HCT116 (cell line): ENCODE measurements at regions of chr12 and their contacts with region 1.

Region 1: DNA sequence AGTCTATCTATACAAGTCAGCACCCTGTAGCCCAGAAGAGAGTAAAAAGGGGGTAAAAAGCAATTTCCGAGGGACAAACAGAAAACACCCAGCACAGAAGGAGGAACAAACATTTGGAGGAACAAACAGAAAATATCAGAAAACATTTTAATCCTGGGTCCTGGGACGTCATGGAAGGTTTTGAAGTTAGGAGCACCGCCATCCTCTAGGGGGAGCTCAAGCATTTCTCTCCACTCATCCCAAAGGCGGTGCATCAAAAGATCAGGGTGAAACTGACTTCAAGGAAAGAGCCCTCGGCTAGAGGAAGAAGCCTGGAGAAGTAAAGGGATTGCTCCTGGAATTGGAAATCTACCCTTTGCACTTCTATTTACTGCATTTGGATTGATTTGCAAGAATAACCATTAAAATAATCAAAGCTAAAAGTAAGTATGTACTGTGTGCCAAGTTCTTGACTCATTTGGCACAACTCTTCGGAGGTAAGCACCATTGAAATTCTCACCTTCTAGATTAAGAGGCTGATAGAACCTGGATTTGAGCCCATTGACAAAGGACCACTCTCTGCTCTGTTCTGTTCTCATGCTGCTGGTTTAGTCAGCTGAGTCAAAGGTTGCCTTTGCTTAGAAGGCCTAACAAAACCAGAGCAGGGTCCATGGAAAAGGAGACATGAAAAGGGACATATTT is 17.2 kb upstream of the POC1B start:
- DNase-seq: peak; percentile 77
- ATAC-seq: peak; percentile 90
- H3K4me3 ChIP-seq: no peak overlapping the region
- H3K27ac ChIP-seq: no peak overlapping the region
- H3K4me1 ChIP-seq: peaks cover 0 to 4% of the 10 kb centered on the region in 2 experiments; a peak in 1 of 4 replicates
- H3K27me3 ChIP-seq: no peaks in the 10 kb centered on the region
- CTCF ChIP-seq: peak; percentile 74 to 92 (median 88)
- POLR2A ChIP-seq: no peak
- RAD21 ChIP-seq: peak; percentile 98

Region 2: GRCh38 chr12:89960011-89960507 is 417.0 kb after region 1 on chr12:
- CTCF ChIA-PET with region 1: no interaction called
- POLR2A ChIA-PET with region 1: no interaction called
- RAD21 ChIA-PET with region 1: no interaction called
- intact Hi-C with region 1: loop called (anchors 5 kb)
- DNase-seq: no peak
- ATAC-seq: no peak
- H3K4me3 ChIP-seq: no peak overlapping the region
- H3K27ac ChIP-seq: no peak overlapping the region
- H3K4me1 ChIP-seq: 0 out of 4 replicates have a peak, but pooled peaks cover 0 to 4% of the 10 kb centered on the region in 2 experiments
- H3K27me3 ChIP-seq: no peaks in the 10 kb centered on the region
- CTCF ChIP-seq: no peak
- POLR2A ChIP-seq: no peak
- RAD21 ChIP-seq: no peak

Region 3: GRCh38 chr12:90102957-90103652 is 560.1 kb after region 1 on chr12:
- CTCF ChIA-PET with region 1: interaction called, 6 read pairs
- POLR2A ChIA-PET with region 1: no interaction called
- RAD21 ChIA-PET with region 1: no interaction called
- intact Hi-C with region 1: loop called (anchors 1 kb)
- DNase-seq: peak; percentile 29
- ATAC-seq: peak; percentile 83
- H3K4me3 ChIP-seq: no peak overlapping the region
- H3K27ac ChIP-seq: no peak overlapping the region
- H3K4me1 ChIP-seq: no peaks in the 10 kb centered on the region
- H3K27me3 ChIP-seq: no peaks in the 10 kb centered on the region
- CTCF ChIP-seq: peak; percentile 34 to 64 (median 60); a peak in 5 of 6 replicates
- POLR2A ChIP-seq: no peak
- RAD21 ChIP-seq: peak; percentile 56

Region 4: DNA sequence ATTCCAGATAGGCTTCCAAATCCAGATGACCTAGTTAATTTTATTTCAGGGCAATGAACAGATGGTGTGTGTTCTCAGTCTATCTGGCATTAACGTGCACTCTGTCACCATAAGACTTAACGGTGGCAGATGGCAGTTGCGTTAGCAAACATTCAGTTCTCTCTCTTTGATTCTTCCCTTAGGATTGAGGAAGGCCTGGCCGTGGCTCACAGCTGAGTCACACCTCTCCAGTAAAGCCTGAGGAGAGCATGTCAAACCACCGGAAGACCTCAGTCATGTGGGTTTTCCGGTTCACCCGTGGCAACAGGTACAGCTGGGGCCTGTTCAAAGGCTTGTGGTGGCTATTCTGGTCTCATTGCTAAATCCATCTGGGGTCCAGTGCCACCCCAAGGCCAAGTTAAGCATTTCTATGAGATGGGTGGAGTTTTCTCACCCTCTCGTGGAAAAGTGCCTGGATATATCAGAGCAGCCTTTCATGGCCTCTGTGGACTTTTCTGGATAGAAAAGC is 710.7 kb after region 1 on chr12:
- CTCF ChIA-PET with region 1: no interaction called
- POLR2A ChIA-PET with region 1: no interaction called
- RAD21 ChIA-PET with region 1: no interaction called
- intact Hi-C with region 1: loop called (anchors 10 kb)
- DNase-seq: peak; percentile 92
- ATAC-seq: peak; percentile 98
- H3K4me3 ChIP-seq: no peak overlapping the region
- H3K27ac ChIP-seq: peak overlapping the region; percentile 7; the same call in 1 of the 2 replicates
- H3K4me1 ChIP-seq: peaks cover 9 to 16% of the 10 kb centered on the region in 2 experiments
- H3K27me3 ChIP-seq: no peaks in the 10 kb centered on the region
- CTCF ChIP-seq: peak; percentile 34 to 49 (median 40); a peak in 5 of 6 replicates
- POLR2A ChIP-seq: no peak
- RAD21 ChIP-seq: peak; percentile 64

Region 5: GRCh38 chr12:90940872-90941499 is 1397.9 kb after region 1 on chr12:
- CTCF ChIA-PET with region 1: interaction called, 5 read pairs
- POLR2A ChIA-PET with region 1: no interaction called
- RAD21 ChIA-PET with region 1: no interaction called
- intact Hi-C with region 1: loop called (anchors 1 kb)
- DNase-seq: peak; percentile 55
- ATAC-seq: peak; percentile 94
- H3K4me3 ChIP-seq: no peak overlapping the region
- H3K27ac ChIP-seq: no peak overlapping the region
- H3K4me1 ChIP-seq: peaks cover 0 to 12% of the 10 kb centered on the region in 2 experiments; a peak in 3 of 4 replicates
- H3K27me3 ChIP-seq: no peaks in the 10 kb centered on the region
- CTCF ChIP-seq: peak; percentile 42 to 72 (median 63); a peak in 5 of 6 replicates
- POLR2A ChIP-seq: no peak
- RAD21 ChIP-seq: peak; percentile 78